ENCODE measurements at regions of chr22 and their contacts with region 1.

Region 1: GRCh38 chr22:28009272-28009827 is 90.3 kb upstream of the PITPNB start:
- DNase-seq: peak; percentile 72 to 85 (median 77)
- H3K4me3 ChIP-seq: no peak overlapping the region
- H3K27ac ChIP-seq: peak overlapping the region in 4 of 59 donors; percentile 23 to 57 (median 28)
- H3K27me3 ChIP-seq: no peaks in the 10 kb centered on the region
- CTCF ChIP-seq: peak; percentile 76 to 99 (median 96)

Region 2: DNA sequence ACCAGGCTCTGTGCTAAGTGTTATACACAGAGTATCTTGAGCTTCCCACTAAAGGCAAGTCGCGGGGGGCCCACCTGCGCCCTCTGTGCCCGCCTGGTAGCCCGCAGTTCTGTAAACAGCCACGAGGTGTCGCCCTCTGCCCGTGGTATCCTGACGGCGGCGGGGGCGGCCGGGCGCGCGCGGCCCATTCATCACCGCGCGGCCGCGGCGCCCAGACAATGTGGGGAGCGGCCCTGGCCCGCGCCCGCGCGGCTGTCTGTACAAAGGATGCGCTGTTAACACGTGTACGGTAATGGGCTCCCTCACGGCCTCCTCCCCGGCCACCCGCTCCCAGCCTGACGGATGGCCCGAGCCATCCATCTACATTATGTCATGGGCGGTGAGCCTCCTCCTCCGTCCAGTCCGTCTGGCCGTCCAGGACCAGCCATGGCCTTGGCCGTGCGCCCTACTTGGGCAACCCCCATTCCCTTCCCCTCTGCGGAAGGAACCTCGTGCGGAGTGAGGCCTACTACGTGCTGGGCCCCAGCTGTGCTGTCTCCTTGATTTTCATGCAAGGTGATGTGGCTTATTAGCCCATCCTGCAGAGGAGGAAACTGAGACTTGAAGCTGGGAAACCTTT is 1252.6 kb before region 1 on chr22:
- intact Hi-C with region 1: loop called in 1 of 2 experiments (anchors 5 kb)
- DNase-seq: peak in 9 of 10 donors; percentile 49 to 78 (median 67)
- H3K4me3 ChIP-seq: peak overlapping the region; percentile 4 to 64 (median 40)
- H3K27ac ChIP-seq: peak overlapping the region in 29 of 59 donors; percentile 8 to 79 (median 55)
- H3K27me3 ChIP-seq: no peaks in the 10 kb centered on the region
- CTCF ChIP-seq: peak in 55 of 56 donors; percentile 70 to 100 (median 94)

Region 3: DNA sequence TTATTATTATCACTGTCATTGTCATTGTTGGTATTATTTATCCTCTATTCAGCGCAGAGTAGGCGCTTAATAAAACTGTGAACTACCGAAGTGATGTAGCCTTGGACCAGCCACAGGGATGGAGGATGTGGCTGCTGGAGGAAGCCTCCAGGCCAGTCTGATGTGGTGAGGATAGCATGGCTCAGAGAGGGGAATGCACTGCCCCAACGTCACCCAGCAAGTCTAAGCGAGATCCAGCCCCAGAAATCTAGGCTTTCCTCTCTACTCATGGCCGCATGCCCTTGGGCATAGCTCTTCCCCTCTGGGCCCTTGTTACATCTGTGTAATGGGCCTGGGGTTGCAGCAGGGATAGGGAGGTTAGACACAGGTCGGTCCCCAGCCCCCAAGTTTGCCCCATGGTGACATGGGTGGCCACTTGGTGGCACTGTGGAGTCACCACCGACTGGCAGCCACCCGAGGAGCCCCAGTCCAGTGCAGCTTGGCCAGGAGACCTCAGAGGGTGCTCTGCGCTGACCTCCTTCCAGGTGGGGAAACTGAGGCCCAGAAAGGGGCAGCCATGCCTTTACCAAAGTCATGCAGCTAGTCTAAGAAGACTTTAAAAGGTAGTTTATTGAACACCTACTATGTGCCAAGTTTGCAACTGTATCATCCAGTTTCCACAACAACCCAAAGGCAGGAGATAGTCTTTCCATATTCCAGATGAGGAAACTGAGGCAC is 603.5 kb before region 1 on chr22:
- intact Hi-C with region 1: loop called in 1 of 2 experiments (anchors 10 kb)
- DNase-seq: peak in 7 of 10 donors; percentile 18 to 70 (median 41)
- H3K4me3 ChIP-seq: no peak overlapping the region
- H3K27ac ChIP-seq: no peak overlapping the region
- H3K27me3 ChIP-seq: peaks cover 0 to 11% (median 0%) of the 10 kb centered on the region in 45 donors
- CTCF ChIP-seq: peak; percentile 24 to 83 (median 67)

Region 4: DNA sequence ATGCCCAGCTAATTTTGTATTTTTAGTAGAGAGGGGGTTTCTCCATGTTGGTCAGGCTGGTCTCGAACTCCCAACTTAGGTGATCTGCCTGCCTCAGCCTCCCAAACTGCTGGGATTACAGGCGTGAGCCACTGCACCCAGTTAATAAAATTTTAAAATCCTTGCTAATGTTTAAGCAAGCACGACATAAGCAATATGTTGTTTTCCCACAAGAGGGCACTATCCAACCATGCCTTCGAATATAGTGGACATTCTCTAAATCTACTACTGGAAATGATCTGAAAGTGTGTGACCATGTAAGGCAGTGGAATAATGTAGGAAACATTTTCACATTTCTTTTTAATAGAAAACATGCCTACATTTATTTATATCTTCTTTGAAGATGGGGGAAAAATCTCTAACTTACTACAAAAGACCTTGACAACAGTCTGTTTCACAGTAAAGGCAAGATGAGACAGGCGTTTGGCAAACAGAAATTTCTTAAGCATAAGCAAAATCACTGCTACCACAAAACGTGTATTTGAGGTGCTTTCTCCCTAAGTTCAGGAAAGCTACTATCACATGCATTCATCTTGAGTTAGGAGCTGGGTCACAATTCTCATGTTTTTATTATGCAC is 128.5 kb before region 1 on chr22:
- intact Hi-C with region 1: loop called (anchors 1 to 2 kb)
- DNase-seq: peak in 2 of 10 donors; percentile 33 to 61
- H3K4me3 ChIP-seq: peak overlapping the region in 34 of 59 donors; percentile 1 to 48 (median 23)
- H3K27ac ChIP-seq: peak overlapping the region; percentile 71 to 96 (median 87)
- H3K27me3 ChIP-seq: no peaks in the 10 kb centered on the region
- CTCF ChIP-seq: peak; percentile 65 to 90 (median 84)

Region 5: GRCh38 chr22:27885977-27886842 is 123.1 kb before region 1 on chr22:
- intact Hi-C with region 1: loop called (anchors 2 kb)
- DNase-seq: peak in 6 of 10 donors; percentile 34 to 67 (median 52)
- H3K4me3 ChIP-seq: no peak overlapping the region
- H3K27ac ChIP-seq: peak overlapping the region in 26 of 59 donors; percentile 3 to 52 (median 21)
- H3K27me3 ChIP-seq: no peaks in the 10 kb centered on the region
- CTCF ChIP-seq: peak; percentile 68 to 99 (median 91)